HCT116 (cell line): ENCODE measurements at regions of chr5 and their contacts with region 1.

Region 1: DNA sequence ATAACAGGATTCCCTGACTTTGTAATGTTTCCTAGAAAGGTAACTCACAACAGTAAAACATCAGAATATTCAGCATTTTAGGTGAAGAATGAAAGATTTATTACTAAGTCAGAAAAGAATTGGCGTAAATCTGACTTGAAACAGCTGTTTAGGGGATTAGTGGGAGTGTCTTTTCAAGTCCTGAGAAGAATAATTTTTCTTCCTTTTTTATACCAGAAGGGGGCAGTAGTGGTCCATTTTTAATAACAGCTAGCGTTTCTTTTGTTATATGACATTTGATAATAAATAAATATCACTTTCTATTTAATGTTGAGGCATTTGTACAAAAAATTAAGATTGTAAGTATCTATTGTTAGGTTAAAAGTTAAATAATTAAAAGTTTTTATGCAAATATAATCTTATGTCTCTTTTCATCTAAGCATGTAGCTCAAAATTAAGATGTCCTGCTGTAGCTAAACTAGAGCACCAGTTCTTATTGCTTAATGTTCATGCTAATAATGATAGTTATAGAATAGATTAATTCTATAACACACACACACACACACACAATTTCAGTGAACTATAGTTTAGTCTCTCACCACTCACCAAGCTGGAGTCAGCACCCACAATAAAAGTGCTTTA is 258.7 kb upstream of the ARRDC3 start:
- DNase-seq: peak; percentile 34
- ATAC-seq: no peak
- H3K4me3 ChIP-seq: no peak overlapping the region; a peak in 1 of 4 replicates
- H3K27ac ChIP-seq: no peak overlapping the region
- H3K4me1 ChIP-seq: no peaks in the 10 kb centered on the region
- H3K27me3 ChIP-seq: no peaks in the 10 kb centered on the region
- CTCF ChIP-seq: peak; percentile 20 to 59 (median 38); a peak in 4 of 6 replicates
- POLR2A ChIP-seq: no peak
- RAD21 ChIP-seq: peak; percentile 70

Region 2: DNA sequence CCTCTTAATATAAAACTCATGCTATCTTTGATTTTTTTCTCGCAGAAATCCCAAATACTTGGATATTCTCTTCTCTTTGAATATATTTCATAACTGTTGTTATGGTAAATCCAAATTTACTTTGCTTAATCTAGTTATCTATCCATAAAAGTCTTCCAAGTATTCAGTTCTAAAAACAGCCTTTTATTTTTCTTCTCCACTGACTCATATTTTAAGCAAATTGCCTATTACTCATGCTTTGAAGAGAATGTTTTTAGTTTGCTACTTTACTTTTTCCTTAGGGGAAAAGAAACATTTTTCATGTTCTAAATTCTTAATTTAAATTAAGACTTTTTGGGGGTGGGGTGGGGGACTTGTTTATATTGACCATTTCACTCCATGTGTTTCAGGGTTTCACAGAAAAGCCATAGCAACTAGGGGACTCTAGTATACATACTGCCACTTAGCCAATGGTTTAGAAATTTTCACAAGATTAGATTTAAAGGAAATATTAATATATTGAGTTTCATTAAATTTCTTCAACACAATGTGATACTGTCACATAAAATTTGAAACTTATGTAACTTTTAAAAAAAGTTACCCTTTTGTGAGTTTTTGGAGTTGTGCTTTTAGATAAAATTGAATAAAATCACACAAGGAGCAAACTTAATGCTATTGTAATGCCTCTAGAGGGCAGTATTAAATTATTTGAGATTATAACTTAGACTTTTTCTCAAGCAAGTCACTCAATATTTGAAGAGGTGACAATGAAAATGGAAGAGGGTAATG is 287.1 kb after region 1 on chr5:
- CTCF ChIA-PET with region 1: interaction called, 7 read pairs
- POLR2A ChIA-PET with region 1: no interaction called
- RAD21 ChIA-PET with region 1: interaction called in 1 of 2 experiments, 3 read pairs
- intact Hi-C with region 1: loop called (anchors 10 kb)
- DNase-seq: peak; percentile 10
- ATAC-seq: peak; percentile 62
- H3K4me3 ChIP-seq: no peak overlapping the region
- H3K27ac ChIP-seq: no peak overlapping the region
- H3K4me1 ChIP-seq: no peaks in the 10 kb centered on the region
- H3K27me3 ChIP-seq: no peaks in the 10 kb centered on the region
- CTCF ChIP-seq: peak; percentile 27 to 69 (median 48); a peak in 3 of 6 replicates
- POLR2A ChIP-seq: no peak
- RAD21 ChIP-seq: peak; percentile 71

Region 3: GRCh38 chr5:92222449-92222848 is 580.6 kb after region 1 on chr5:
- CTCF ChIA-PET with region 1: interaction called, 49 read pairs
- POLR2A ChIA-PET with region 1: no interaction called
- RAD21 ChIA-PET with region 1: interaction called, 7 to 8 read pairs
- intact Hi-C with region 1: loop called (anchors 2 kb)
- DNase-seq: peak; percentile 12
- ATAC-seq: peak; percentile 68
- H3K4me3 ChIP-seq: no peak overlapping the region
- H3K27ac ChIP-seq: no peak overlapping the region
- H3K4me1 ChIP-seq: no peaks in the 10 kb centered on the region
- H3K27me3 ChIP-seq: no peaks in the 10 kb centered on the region
- CTCF ChIP-seq: peak; percentile 40 to 52 (median 42); a peak in 4 of 6 replicates
- POLR2A ChIP-seq: no peak
- RAD21 ChIP-seq: peak; percentile 67

Region 4: DNA sequence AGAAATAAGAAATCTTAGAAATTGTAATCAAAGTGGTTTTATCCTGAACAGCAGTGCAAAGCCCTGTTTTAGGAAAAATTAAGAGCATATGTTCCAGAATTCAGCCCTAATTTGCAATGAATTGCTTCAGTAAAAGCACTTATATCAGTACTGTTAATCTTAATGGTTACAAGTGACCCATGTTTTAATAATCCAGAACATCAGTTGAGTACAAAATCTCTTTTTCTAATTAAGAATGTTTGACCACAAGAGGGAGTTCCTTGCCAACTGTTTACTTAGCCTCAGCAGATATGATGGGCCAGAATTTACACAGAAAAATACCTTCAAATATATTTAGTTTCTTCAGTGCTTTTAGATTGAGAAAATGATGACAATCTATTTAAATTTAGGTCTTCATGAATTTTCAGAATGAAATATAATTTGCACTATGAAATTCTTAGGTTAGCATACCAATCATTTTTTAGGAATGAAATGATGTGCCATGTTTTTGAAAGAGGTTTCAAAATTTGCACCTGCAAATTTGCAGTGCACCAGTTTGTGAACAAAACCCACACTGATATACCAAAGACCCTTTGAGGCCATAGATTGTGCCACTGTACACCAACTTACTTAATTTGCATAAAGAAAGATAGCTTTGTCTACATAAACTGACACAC is 667.6 kb after region 1 on chr5:
- CTCF ChIA-PET with region 1: no interaction called
- POLR2A ChIA-PET with region 1: no interaction called
- RAD21 ChIA-PET with region 1: no interaction called
- intact Hi-C with region 1: loop called (anchors 10 kb)
- DNase-seq: peak; percentile 13
- ATAC-seq: peak; percentile 62
- H3K4me3 ChIP-seq: no peak overlapping the region
- H3K27ac ChIP-seq: peak overlapping the region; percentile 29; the same call in 1 of the 2 replicates
- H3K4me1 ChIP-seq: peaks cover 0 to 13% of the 10 kb centered on the region in 2 experiments; a peak in 1 of 4 replicates
- H3K27me3 ChIP-seq: no peaks in the 10 kb centered on the region
- CTCF ChIP-seq: peak; percentile 42 to 68 (median 47); a peak in 5 of 6 replicates
- POLR2A ChIP-seq: no peak
- RAD21 ChIP-seq: peak; percentile 77

Region 5: GRCh38 chr5:92909602-92909962 is 1267.7 kb after region 1 on chr5:
- CTCF ChIA-PET with region 1: interaction called, 11 read pairs
- POLR2A ChIA-PET with region 1: no interaction called
- RAD21 ChIA-PET with region 1: no interaction called
- intact Hi-C with region 1: no loop called
- DNase-seq: no peak
- ATAC-seq: peak; percentile 82
- H3K4me3 ChIP-seq: no peak overlapping the region
- H3K27ac ChIP-seq: peak overlapping the region; percentile 68
- H3K4me1 ChIP-seq: peaks cover 26 to 36% of the 10 kb centered on the region in 2 experiments
- H3K27me3 ChIP-seq: no peaks in the 10 kb centered on the region
- CTCF ChIP-seq: peak; percentile 41 to 76 (median 73); a peak in 5 of 6 replicates
- POLR2A ChIP-seq: no peak
- RAD21 ChIP-seq: peak; percentile 60